ENCODE measurements at regions of chr1 and their contacts with region 1.

Region 1: GRCh38 chr1:147494998-147495580 is 46.2 kb upstream of the BCL9 start:
- DNase-seq: peak; percentile 61 to 65
- H3K4me3 ChIP-seq: no peak overlapping the region
- H3K27ac ChIP-seq: no peak overlapping the region
- H3K4me1 ChIP-seq: no peaks in the 10 kb centered on the region
- H3K27me3 ChIP-seq: no peaks in the 10 kb centered on the region
- CTCF ChIP-seq: peak; percentile 93

Region 2: GRCh38 chr1:147204080-147204479 is 291.0 kb before region 1 on chr1:
- CTCF ChIA-PET with region 1: no interaction called
- POLR2A ChIA-PET with region 1: no interaction called
- intact Hi-C with region 1: no loop called
- DNase-seq: no peak
- H3K4me3 ChIP-seq: no peak overlapping the region
- H3K27ac ChIP-seq: no peak overlapping the region
- H3K4me1 ChIP-seq: no peaks in the 10 kb centered on the region
- H3K27me3 ChIP-seq: no peaks in the 10 kb centered on the region
- CTCF ChIP-seq: no peak

Region 3: GRCh38 chr1:147273409-147274336 is 221.4 kb before region 1 on chr1:
- CTCF ChIA-PET with region 1: interaction called, 8 read pairs
- POLR2A ChIA-PET with region 1: no interaction called
- intact Hi-C with region 1: loop called (anchors 2 kb)
- DNase-seq: peak; percentile 13 to 69
- H3K4me3 ChIP-seq: no peak overlapping the region
- H3K27ac ChIP-seq: peak overlapping the region; percentile 89
- H3K4me1 ChIP-seq: peaks cover 12% of the 10 kb centered on the region
- H3K27me3 ChIP-seq: no peaks in the 10 kb centered on the region
- CTCF ChIP-seq: peak; percentile 62

Region 4: DNA sequence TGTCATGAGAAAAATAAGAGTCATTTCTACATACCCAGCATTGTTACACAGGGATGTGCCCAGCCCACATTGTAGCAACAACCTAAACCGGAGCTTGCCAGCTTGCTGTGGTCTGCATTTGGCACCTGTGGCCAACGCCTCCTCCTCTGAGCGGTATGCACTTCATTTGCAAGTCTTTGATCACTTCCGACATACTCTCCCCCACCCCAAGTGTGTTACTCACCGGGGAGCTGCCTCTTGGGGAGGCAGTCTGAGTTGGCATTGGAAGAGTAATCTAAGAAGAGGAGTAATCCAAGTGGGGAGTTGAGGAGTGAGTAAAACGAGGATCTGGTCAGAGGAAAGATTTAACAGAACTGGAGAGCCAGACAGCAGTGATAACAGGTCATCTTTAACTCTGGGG is 50.0 kb after region 1 on chr1:
- CTCF ChIA-PET with region 1: no interaction called
- POLR2A ChIA-PET with region 1: no interaction called
- intact Hi-C with region 1: loop called (anchors 2 kb)
- DNase-seq: peak; percentile 83 to 96
- H3K4me3 ChIP-seq: no peak overlapping the region
- H3K27ac ChIP-seq: peak overlapping the region; percentile 56
- H3K4me1 ChIP-seq: peaks cover 44% of the 10 kb centered on the region
- H3K27me3 ChIP-seq: no peaks in the 10 kb centered on the region
- CTCF ChIP-seq: no peak

Region 5: GRCh38 chr1:147627435-147628110 is 132.5 kb after region 1 on chr1:
- CTCF ChIA-PET with region 1: interaction called, 9 read pairs
- POLR2A ChIA-PET with region 1: no interaction called
- intact Hi-C with region 1: loop called (anchors 1 kb)
- DNase-seq: peak in 1 of 2 experiments; percentile 25
- H3K4me3 ChIP-seq: no peak overlapping the region
- H3K27ac ChIP-seq: 0 out of 2 replicates have a peak overlapping the region, but pooled peaks have one; percentile 9
- H3K4me1 ChIP-seq: no peaks in the 10 kb centered on the region
- H3K27me3 ChIP-seq: no peaks in the 10 kb centered on the region
- CTCF ChIP-seq: peak; percentile 94

Region 6: DNA sequence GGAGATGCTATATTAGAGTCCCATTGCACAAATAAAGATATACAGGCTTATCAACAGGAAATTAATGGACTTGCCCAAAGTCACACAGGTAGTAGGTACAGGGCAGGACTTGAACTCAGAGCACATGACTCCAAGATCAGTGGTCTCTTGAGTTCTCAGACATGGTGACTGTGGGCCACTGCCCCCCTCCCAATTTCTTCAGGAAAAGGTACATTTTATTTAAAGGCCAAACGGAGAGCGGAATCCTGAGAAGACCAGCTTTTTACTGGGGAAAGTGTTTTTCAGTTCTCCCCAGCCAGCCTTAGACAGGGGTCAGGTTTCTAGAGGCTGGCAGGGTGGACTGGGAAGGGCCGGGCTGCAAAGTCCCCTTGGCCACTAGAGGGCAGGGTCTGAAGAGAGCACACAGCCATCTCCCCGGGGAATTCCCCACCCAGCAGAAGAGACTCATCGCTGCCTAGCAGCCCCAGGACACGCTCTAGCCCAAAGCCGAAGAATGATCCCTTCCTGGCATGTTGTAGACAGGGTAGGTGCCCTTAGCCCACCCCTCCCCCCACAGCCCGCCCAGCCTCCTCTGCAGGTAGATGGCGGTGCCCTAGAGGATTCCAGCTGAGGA is 145.6 kb after region 1 on chr1:
- CTCF ChIA-PET with region 1: no interaction called
- POLR2A ChIA-PET with region 1: no interaction called
- intact Hi-C with region 1: loop called (anchors 1 kb)
- DNase-seq: peak in 1 of 2 experiments; percentile 69
- H3K4me3 ChIP-seq: no peak overlapping the region
- H3K27ac ChIP-seq: no peak overlapping the region
- H3K4me1 ChIP-seq: peaks cover 8% of the 10 kb centered on the region; the same call in 1 of the 2 replicates
- H3K27me3 ChIP-seq: no peaks in the 10 kb centered on the region
- CTCF ChIP-seq: peak; percentile 83

Region 7: DNA sequence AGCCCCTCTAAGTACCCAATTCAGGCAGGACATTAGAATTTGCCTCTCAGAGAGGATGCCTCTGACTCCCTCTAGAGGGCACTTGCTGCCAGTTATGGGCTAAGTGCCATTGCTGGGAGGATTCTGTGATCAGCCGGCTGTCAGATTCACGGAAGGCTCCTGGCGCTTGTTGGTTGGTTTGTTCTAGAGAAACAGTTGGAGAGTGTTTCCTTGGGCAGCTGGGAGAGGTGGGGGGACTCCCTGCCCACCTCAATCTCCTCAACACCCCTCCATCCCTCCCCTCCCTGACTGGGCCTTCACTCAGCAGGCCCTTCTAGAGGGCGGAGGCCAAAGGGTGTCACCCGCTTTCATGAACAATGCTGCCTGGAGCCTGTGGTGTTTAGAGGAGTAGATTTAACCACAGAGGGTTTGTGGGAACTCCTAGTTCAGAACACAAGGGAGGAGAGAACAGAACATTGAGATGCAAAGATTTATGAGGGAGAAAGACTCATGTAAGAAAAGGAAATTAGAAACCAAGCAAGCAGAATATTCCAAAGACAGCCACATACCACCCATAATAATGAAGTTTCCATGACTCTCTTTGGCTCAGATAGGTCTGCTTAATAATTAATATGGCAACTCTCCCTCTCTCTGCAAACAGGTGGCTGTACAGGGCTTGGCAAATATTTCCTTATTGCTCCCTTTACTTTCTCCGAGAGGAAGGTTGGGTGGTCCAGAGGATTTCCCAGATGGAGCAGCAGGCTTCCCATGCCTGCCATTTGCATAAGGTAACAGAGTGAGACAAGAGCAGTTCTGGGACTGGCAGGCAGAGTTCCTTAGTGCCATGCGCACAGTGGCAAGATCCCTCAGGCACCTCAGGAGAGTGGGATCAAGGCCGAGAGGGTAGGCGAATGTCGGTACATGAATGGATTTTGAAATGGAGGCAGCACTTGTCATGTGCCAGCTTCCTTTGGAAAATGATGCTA is 205.2 kb after region 1 on chr1:
- CTCF ChIA-PET with region 1: no interaction called
- POLR2A ChIA-PET with region 1: no interaction called
- intact Hi-C with region 1: loop called (anchors 1 kb)
- DNase-seq: peak in 1 of 2 experiments; percentile 59
- H3K4me3 ChIP-seq: no peak overlapping the region
- H3K27ac ChIP-seq: no peak overlapping the region
- H3K4me1 ChIP-seq: no peaks in the 10 kb centered on the region
- H3K27me3 ChIP-seq: no peaks in the 10 kb centered on the region
- CTCF ChIP-seq: peak; percentile 84

Measured in PC-9 (cell line).